Activated CD4-positive, alpha-beta memory T cell treated with anti-CD3 and anti-CD28 coated beads, Interleukin-2, amount 10 ng/mL, durations not matched to agents 7 days and 5 days (primary cell): ENCODE measurements at regions of chr14 and their contacts with region 1.

Region 1: GRCh38 chr14:24630872-24631477 is 3.0 kb downstream of the GZMB start:
- DNase-seq: no peak
- H3K4me3 Mint-ChIP-seq: peak overlapping the region; percentile 84
- H3K27ac Mint-ChIP-seq: peak overlapping the region; percentile 90
- H3K4me1 Mint-ChIP-seq: peaks cover 51% of the 10 kb centered on the region
- H3K27me3 Mint-ChIP-seq: no peaks in the 10 kb centered on the region

Region 2: DNA sequence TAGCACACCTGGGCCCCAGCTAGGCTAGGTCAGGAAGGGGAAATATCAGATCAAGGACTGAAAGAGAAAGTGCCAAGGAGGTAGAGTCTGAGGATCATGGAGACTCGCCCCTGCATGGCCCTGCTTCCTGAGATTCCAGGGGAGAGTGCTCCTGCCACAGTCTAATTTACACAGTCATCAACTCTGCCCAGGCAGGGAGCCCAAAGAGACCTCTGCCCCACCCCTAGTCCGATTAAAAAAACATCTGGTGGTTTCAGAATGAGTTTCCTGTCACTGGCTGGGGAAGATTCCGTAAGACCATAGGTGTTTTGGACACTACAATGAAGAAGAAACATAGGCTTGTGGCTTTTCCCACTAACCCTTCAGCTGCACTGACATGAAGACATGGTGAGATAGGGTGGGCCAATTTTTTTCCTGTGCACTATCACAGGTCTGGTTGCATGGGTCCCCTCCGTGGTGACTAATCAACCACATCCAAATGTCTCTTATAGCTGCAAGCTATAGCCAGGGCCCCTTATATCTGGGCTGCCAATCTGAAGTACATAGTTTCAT is 34.5 kb after region 1 on chr14:
- CTCF ChIA-PET with region 1: interaction called, 7 read pairs
- POLR2A ChIA-PET with region 1: interaction called, 13 read pairs
- DNase-seq: peak; percentile 72
- H3K4me3 Mint-ChIP-seq: peak overlapping the region; percentile 49
- H3K27ac Mint-ChIP-seq: peak overlapping the region; percentile 81
- H3K4me1 Mint-ChIP-seq: peaks cover 90% of the 10 kb centered on the region
- H3K27me3 Mint-ChIP-seq: no peaks in the 10 kb centered on the region

Region 3: GRCh38 chr14:24673534-24674203 is 42.7 kb after region 1 on chr14:
- CTCF ChIA-PET with region 1: interaction called, 29 read pairs
- POLR2A ChIA-PET with region 1: interaction called, 48 read pairs
- DNase-seq: peak; percentile 83
- H3K4me3 Mint-ChIP-seq: peak overlapping the region; percentile 76
- H3K27ac Mint-ChIP-seq: peak overlapping the region; percentile 97
- H3K4me1 Mint-ChIP-seq: peaks cover 88% of the 10 kb centered on the region
- H3K27me3 Mint-ChIP-seq: no peaks in the 10 kb centered on the region

Region 4: DNA sequence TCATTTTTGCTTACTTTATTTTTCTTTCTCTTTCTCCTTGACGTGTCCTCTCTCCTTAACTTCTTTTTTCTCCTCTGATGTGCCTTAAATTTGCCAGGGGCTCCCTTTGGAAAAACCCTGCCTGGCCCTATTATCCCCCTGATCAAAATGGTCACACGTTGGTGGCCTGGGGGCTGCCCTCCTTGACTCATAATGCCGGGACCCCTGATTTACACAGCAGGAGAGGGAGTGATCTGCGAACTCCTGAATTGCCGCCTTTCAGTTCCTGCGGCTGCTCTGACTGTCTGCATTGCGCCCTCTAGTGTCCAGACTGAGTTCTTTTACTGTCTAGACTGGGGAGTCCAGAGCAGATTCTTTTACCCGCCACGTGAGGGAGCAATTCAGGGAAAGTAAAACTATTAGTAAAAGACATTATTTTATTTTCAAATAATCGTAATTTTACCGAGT is 47.8 kb after region 1 on chr14:
- CTCF ChIA-PET with region 1: interaction called, 29 read pairs
- POLR2A ChIA-PET with region 1: interaction called, 48 read pairs
- DNase-seq: peak; percentile 82
- H3K4me3 Mint-ChIP-seq: peak overlapping the region; percentile 69
- H3K27ac Mint-ChIP-seq: peak overlapping the region; percentile 70
- H3K4me1 Mint-ChIP-seq: peaks cover 68% of the 10 kb centered on the region
- H3K27me3 Mint-ChIP-seq: peaks cover 6% of the 10 kb centered on the region

Region 5: DNA sequence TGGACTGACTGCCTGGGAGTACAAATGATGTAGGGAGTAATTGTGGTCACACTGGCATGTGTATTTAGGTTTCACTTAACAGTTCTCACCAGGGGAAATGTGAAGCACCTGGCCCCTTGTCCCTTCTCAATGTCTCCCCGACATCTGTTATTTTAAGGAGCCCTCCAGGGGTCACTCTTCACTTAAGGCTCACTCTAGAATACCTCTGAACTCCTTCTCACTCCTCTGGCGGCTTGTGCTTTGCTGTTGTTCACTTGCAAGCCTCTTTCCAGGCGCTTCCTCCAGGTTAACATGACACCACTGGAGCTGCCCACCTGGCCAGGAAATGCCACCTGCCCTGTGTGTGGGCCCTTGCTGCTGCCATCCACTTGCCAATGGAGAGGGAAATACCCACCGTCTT is 59.5 kb after region 1 on chr14:
- CTCF ChIA-PET with region 1: interaction called, 13 read pairs
- POLR2A ChIA-PET with region 1: interaction called, 9 read pairs
- DNase-seq: no peak
- H3K4me3 Mint-ChIP-seq: no peak overlapping the region
- H3K27ac Mint-ChIP-seq: no peak overlapping the region
- H3K4me1 Mint-ChIP-seq: peaks cover 31% of the 10 kb centered on the region
- H3K27me3 Mint-ChIP-seq: peaks cover 1% of the 10 kb centered on the region

Region 6: GRCh38 chr14:24851837-24852236 is 220.9 kb after region 1 on chr14:
- CTCF ChIA-PET with region 1: no interaction called
- POLR2A ChIA-PET with region 1: no interaction called
- DNase-seq: no peak
- H3K4me3 Mint-ChIP-seq: no peak overlapping the region
- H3K27ac Mint-ChIP-seq: no peak overlapping the region
- H3K4me1 Mint-ChIP-seq: no peaks in the 10 kb centered on the region
- H3K27me3 Mint-ChIP-seq: peaks cover 11% of the 10 kb centered on the region